PC-9 (cell line): ENCODE measurements at regions of chr17 and their contacts with region 1.

Region 1: DNA sequence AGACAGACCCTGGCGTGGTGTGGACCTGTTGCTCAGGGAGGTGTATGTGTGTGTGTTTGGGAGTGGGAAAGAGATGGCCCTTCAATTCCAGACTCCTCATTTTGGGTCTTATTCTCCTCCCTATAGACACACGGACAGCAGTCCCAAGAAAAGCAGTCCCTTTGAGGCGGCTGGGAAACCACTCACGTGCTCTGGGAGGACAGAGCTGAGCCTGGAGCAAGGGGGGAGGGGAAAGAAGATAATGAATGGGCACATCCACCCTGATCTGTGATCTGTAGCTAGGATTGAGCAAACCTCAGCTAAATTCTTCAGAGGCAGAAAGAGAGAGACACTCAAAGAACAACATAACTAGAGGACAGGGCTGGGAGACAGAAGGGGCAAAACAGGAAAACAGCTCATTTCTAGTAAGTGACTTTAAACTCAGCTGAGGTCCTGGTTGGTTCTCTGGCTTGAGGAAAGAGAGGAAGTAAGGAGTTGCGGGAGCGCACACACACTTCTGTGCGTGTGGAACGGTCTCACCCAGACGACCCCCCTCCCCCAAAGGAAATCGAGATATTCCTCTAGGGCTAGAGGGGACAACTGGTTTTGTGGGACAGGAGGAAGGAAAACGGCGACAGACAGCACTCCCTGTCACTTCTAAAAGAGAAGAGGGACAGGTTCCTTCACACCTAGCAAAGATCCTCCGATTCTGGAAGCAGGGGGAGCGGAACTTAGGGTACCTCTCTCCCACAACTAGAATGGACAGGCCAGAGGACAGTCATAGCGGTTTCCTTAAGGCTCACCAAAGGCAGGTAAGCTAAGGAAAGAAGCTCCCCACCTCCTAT is 658 bp downstream of the RAB5C start:
- DNase-seq: no peak
- H3K4me3 ChIP-seq: peak overlapping the region; percentile 97
- H3K27ac ChIP-seq: no peak overlapping the region; the same call in 1 of the 2 replicates
- H3K4me1 ChIP-seq: peaks cover 7% of the 10 kb centered on the region; the same call in 1 of the 2 replicates
- H3K27me3 ChIP-seq: no peaks in the 10 kb centered on the region
- CTCF ChIP-seq: no peak

Region 2: DNA sequence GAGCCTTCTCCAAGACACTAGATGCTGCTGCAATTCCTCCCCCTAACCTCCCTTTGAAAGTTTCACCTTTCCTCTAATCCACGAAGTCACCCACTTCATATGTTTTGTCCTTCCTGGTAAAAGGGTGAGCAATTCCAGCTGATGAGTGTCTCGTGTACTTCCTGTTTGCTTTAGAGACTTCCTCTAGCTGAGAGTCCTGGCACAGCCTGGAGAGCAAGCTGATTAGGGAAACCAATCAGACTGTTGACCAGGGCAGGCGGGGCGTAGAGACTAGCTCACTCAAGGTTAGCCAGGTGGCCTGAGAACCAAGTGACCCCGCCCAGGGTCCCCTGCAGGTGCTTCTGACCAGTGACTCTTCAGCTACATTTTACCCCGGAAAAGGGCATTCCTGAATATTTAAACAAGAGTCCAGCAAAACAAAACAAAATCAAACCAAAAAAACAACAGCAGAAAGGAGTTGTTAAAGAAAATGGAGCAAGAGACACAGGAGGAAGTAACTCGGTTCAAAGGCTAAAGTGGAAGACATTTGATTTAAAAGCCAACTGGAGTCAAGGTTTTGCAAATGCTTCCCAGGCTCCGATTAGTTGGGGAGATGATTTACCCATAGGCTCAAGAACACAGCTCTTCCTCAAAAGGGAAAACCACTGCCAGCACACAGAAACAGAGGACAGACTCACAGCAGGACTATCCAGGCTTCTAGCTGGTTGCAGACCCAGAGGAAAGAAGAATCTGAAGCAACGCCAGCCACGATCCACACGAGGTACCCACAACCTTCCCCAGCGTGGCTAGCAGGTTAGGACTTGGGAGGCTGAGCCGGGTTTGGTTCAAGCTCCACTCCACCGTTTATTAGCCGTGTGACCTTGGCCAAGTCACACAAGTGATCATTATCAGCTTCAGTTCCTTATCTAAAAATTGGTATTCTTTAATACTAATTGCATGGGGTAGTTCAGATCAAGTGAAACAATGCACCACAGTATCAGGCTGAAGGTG is 18.2 kb before region 1 on chr17:
- CTCF ChIA-PET with region 1: no interaction called
- POLR2A ChIA-PET with region 1: interaction called, 21 read pairs
- intact Hi-C with region 1: no loop called
- DNase-seq: peak; percentile 74 to 95
- H3K4me3 ChIP-seq: no peak overlapping the region
- H3K27ac ChIP-seq: peak overlapping the region; percentile 78
- H3K4me1 ChIP-seq: peaks cover 24% of the 10 kb centered on the region
- H3K27me3 ChIP-seq: no peaks in the 10 kb centered on the region
- CTCF ChIP-seq: no peak

Region 3: DNA sequence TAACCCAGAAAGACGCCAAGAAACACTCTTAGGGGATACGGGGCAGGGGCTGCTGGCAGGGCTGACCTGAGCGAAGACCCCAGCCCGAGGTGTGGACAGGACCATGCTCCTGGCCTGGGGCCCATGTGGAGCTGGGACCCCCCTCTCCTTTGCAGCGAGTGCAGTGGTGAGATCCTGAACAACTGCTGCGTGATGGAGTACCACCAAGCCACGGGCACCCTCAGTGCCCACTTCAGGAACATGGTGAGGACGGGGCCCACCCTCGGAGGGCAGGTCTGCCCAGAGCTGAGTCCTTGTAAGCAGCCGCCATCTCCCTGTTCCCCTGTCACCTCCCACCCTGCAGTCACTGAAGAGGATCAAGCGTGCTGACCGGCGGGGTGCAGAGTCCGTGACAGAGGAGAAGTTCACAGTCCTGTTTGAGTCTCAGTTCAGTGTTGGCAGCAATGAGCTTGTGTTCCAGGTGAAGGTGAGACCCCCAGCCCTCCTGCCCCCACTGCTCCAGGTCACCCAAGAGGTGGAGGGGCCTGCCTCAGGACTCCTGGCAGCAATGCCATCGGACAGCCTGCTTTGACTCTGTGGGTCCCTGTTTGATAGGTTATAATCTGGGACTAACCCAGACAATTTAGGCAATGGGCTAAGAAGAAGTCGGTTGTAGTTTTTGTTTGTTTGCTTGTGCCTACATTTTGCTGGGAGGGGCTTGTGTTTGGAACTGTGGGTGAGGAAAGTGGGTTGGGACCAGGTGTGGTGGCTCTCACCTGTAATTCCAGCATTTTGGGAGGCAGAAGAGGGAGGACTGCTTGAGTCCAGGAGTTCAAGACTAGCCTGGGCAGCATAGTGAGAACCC is 150.3 kb after region 1 on chr17:
- CTCF ChIA-PET with region 1: interaction called, 11 read pairs
- POLR2A ChIA-PET with region 1: no interaction called
- intact Hi-C with region 1: no loop called
- DNase-seq: no peak
- H3K4me3 ChIP-seq: no peak overlapping the region
- H3K27ac ChIP-seq: no peak overlapping the region
- H3K4me1 ChIP-seq: no peaks in the 10 kb centered on the region
- H3K27me3 ChIP-seq: no peaks in the 10 kb centered on the region
- CTCF ChIP-seq: no peak